H1 (cell line): ENCODE measurements at regions of chr11 and their contacts with region 1.

Region 1: DNA sequence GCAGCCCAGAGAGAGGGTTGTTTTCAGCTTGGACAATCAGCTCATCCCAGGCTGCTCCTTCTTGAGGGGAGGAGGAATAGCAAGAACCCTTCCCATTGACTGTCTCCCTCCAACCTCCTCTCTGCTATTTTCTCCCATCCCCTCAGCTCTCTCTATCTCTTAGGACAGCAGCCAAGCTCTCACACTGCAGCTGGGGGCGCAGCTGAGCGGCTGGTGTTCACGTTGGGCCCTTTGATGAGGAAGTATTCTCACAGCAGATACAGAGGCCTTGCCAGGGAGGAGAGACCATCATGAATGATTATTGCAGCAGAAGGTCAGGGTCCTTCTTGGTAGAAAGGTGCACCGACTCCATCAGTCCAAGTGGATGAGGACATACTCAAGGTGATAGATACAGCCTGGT is 26.5 kb upstream of the CADM1 start:
- DNase-seq: no peak
- H3K4me3 ChIP-seq: no peak overlapping the region
- H3K27ac ChIP-seq: no peak overlapping the region
- H3K4me1 ChIP-seq: peaks cover 6 to 9% (median 7%) of the 10 kb centered on the region in 4 experiments
- H3K27me3 ChIP-seq: no peaks in the 10 kb centered on the region; a peak in 1 of 7 replicates
- CTCF ChIP-seq: peak; percentile 67 to 92 (median 83)
- EP300 ChIP-seq: no peak
- POLR2A ChIP-seq: no peak
- RAD21 ChIP-seq: peak; percentile 61 to 77

Region 2: DNA sequence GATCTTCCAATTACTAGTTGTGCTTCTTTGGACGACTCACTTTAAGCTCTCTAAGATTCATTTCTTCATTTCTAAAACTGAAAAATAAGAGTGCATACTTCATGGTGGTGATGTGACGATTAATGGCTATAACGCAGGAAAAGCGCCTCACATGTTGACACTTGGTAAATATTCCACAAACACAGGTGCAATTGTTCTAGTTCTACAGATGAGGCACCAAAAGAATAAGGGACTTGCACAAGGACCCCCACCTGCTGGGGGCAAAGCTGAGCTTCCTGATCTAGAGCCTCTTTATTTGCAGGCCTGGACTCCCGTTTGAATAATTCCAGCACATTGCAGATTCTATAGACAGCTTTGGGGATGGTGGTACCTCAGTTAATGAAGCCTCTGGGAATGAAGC is 11.8 kb before region 1 on chr11:
- CTCF ChIA-PET with region 1: interaction called, 64 read pairs
- POLR2A ChIA-PET with region 1: interaction called, 4 read pairs
- DNase-seq: no peak
- H3K4me3 ChIP-seq: no peak overlapping the region
- H3K27ac ChIP-seq: no peak overlapping the region
- H3K4me1 ChIP-seq: no peaks in the 10 kb centered on the region
- H3K27me3 ChIP-seq: no peaks in the 10 kb centered on the region; a peak in 1 of 7 replicates
- CTCF ChIP-seq: no peak
- EP300 ChIP-seq: no peak
- POLR2A ChIP-seq: no peak
- RAD21 ChIP-seq: no peak

Region 3: GRCh38 chr11:115545581-115546210 is 14.9 kb after region 1 on chr11:
- CTCF ChIA-PET with region 1: interaction called, 18 read pairs
- POLR2A ChIA-PET with region 1: interaction called, 3 read pairs
- DNase-seq: no peak
- H3K4me3 ChIP-seq: no peak overlapping the region
- H3K27ac ChIP-seq: no peak overlapping the region
- H3K4me1 ChIP-seq: peaks cover 3 to 13% (median 10%) of the 10 kb centered on the region in 4 experiments
- H3K27me3 ChIP-seq: no peaks in the 10 kb centered on the region
- CTCF ChIP-seq: no peak
- EP300 ChIP-seq: no peak
- POLR2A ChIP-seq: no peak
- RAD21 ChIP-seq: no peak